ENCODE measurements at regions of chr1 and their contacts with region 1.

Region 1: GRCh38 chr1:157090196-157090647 is 9.4 kb downstream of the ETV3L start:
- DNase-seq: peak; percentile 86
- H3K4me3 Mint-ChIP-seq: no peak overlapping the region
- H3K27ac Mint-ChIP-seq: no peak overlapping the region
- H3K4me1 Mint-ChIP-seq: no peaks in the 10 kb centered on the region
- H3K27me3 Mint-ChIP-seq: peaks cover 6% of the 10 kb centered on the region

Region 2: DNA sequence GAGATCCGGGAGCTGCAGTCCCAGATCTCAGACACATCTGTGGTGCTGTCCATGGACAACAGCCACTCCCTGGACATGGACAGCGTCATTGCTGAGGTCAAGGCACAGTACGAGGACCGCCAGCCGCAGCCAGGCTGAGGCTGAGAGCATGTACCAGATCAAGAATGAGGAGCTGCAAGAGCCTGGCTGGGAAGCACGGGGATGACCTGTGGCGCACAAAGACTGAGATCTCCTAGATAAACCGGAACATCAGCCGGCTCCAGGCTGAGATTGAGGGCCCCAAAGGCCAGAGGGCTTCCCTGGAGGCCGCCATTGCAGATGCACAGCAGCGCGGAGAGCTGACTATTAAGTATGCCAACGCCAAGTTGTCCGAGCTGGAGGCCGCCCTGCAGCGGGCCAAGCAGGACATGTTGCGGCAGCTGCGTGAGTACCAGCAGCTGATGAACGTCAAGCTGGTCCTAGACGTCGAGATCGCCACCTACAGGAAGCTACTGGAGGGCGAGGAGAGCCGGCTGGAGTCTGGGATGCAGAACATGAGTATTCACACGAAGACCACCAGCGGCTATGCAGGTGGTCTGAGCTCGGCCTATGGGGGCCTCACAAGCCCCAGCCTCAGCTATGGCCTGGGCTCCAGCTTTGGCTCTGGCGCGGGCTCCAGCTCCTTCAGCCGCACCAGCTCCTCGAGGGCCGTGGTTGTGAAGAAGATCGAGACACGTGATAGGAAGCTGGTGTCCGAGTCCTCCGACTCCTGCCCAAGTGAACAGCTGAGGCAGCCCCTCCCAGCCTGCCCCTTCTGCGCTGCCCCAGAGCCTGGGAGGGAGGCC is 16.1 kb before region 1 on chr1:
- CTCF ChIA-PET with region 1: interaction called, 14 read pairs
- POLR2A ChIA-PET with region 1: no interaction called
- DNase-seq: peak; percentile 40
- H3K4me3 Mint-ChIP-seq: no peak overlapping the region
- H3K27ac Mint-ChIP-seq: no peak overlapping the region
- H3K4me1 Mint-ChIP-seq: no peaks in the 10 kb centered on the region
- H3K27me3 Mint-ChIP-seq: peaks cover 30% of the 10 kb centered on the region

Region 3: GRCh38 chr1:157133426-157133825 is 43.2 kb after region 1 on chr1:
- CTCF ChIA-PET with region 1: interaction called, 48 read pairs
- POLR2A ChIA-PET with region 1: interaction called, 3 read pairs
- DNase-seq: no peak
- H3K4me3 Mint-ChIP-seq: peak overlapping the region; percentile 64
- H3K27ac Mint-ChIP-seq: peak overlapping the region; percentile 86
- H3K4me1 Mint-ChIP-seq: peaks cover 66% of the 10 kb centered on the region
- H3K27me3 Mint-ChIP-seq: no peaks in the 10 kb centered on the region

Region 4: GRCh38 chr1:157138220-157139051 is 48.2 kb after region 1 on chr1 and contains the start of gene ETV3:
- CTCF ChIA-PET with region 1: interaction called, 48 read pairs
- POLR2A ChIA-PET with region 1: interaction called, 3 read pairs
- DNase-seq: peak; percentile 94
- H3K4me3 Mint-ChIP-seq: peak within 1 kb of the TSS; percentile 92
- H3K27ac Mint-ChIP-seq: peak within 1 kb of the TSS; percentile 86
- H3K4me1 Mint-ChIP-seq: peaks cover 51% of the 10 kb centered on the region
- H3K27me3 Mint-ChIP-seq: no peaks in the 10 kb centered on the region
- total RNA-seq, gene ETV3: 47.5 to 51.1 TPM

Region 5: DNA sequence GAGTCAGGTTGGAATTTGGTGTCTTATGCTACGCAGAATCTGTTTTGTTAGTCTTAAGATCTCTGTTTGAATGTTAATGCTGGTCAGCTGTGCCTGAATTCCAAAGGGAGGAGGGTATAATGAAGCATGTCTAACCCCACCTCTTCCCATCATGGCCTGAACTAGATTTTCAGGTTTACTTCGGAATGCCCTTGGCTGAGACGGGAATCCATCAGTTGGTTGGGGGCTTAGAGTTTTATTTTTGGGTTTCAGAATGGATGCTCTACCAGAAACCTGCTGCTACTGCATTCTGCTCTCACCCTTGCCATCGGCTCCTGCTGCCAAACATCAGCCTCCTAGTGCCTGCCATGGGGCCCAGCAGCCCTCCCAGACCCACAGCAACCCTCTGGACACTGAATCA is 72.1 kb after region 1 on chr1:
- CTCF ChIA-PET with region 1: interaction called, 436 read pairs
- POLR2A ChIA-PET with region 1: interaction called, 30 read pairs
- DNase-seq: no peak
- H3K4me3 Mint-ChIP-seq: no peak overlapping the region
- H3K27ac Mint-ChIP-seq: no peak overlapping the region
- H3K4me1 Mint-ChIP-seq: peaks cover 3% of the 10 kb centered on the region
- H3K27me3 Mint-ChIP-seq: peaks cover 20% of the 10 kb centered on the region